PC-9 (cell line): ENCODE measurements at regions of chr1 and their contacts with region 1.

Region 1: DNA sequence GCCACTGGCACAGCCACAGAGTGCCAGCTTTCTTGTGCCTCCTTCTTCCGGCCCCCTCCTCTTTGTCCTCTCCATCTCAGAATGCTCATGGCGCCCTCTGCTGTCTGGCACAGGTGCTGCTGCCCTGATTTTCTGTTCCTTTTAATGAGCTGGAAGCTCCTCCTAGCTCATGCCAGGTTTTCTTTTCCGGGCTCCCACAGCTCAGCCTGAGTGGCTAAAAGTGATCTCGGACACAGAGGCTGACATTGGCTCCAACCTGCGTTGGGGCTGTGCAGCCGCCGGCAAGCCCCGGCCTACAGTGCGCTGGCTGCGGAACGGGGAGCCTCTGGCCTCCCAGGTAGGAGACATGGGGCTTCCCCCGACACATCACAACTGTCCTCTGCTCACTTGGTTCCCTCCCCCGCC is 18.7 kb downstream of the CNTN2 start:
- DNase-seq: peak; percentile 37 to 77
- H3K4me3 ChIP-seq: no peak overlapping the region
- H3K27ac ChIP-seq: no peak overlapping the region
- H3K4me1 ChIP-seq: no peaks in the 10 kb centered on the region
- H3K27me3 ChIP-seq: peaks cover 84% of the 10 kb centered on the region
- CTCF ChIP-seq: peak; percentile 91

Region 2: GRCh38 chr1:204959374-204959773 is 102.3 kb before region 1 on chr1:
- CTCF ChIA-PET with region 1: no interaction called
- POLR2A ChIA-PET with region 1: no interaction called
- intact Hi-C with region 1: no loop called
- DNase-seq: no peak
- H3K4me3 ChIP-seq: no peak overlapping the region
- H3K27ac ChIP-seq: no peak overlapping the region
- H3K4me1 ChIP-seq: no peaks in the 10 kb centered on the region
- H3K27me3 ChIP-seq: peaks cover 100% of the 10 kb centered on the region
- CTCF ChIP-seq: no peak

Region 3: GRCh38 chr1:204975570-204976235 is 86.0 kb before region 1 on chr1:
- CTCF ChIA-PET with region 1: interaction called, 3 read pairs
- POLR2A ChIA-PET with region 1: no interaction called
- intact Hi-C with region 1: loop called (anchors 1 kb)
- DNase-seq: peak in 1 of 2 experiments; percentile 59
- H3K4me3 ChIP-seq: no peak overlapping the region
- H3K27ac ChIP-seq: no peak overlapping the region
- H3K4me1 ChIP-seq: no peaks in the 10 kb centered on the region
- H3K27me3 ChIP-seq: peaks cover 93% of the 10 kb centered on the region
- CTCF ChIP-seq: peak; percentile 91

Region 4: DNA sequence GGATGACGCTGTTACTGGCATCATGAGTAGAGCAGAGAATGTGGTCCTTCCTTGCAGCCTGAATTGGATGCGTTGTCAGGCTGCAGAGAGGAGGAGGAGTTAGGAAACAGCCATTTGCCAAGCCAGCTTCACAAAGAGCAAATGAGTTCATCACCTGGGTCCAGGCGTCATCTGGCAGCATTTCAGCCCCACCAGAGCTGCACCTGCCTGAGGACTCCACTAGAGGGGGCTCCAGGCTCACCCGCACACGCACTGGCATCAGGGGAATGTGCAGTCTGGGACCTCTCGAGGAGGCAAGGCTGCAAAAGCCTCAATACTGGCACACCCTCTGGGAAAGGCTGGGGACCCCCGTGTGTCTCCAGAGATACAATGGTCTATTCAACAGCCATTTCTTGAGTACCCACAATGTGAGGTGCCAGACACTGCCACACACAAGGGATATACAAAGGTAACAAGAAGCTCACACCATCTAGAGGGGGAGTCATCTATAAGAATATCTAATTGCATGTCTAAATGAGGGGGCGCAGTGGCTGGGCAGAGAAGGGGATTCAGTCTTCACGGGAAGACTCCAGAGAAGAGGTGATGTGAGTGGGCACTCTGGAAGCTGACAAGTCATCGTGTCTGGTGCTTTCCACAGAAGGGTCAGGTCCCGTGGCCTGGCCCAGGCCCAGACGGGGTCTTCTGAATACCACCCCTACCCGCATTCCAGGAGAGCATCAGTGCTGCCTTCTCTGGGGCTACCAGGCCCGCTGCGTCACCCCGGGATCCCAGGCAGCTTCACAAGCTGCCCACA is 72.2 kb before region 1 on chr1:
- CTCF ChIA-PET with region 1: interaction called, 25 read pairs
- POLR2A ChIA-PET with region 1: no interaction called
- intact Hi-C with region 1: loop called (anchors 1 kb)
- DNase-seq: peak in 1 of 2 experiments; percentile 68
- H3K4me3 ChIP-seq: no peak overlapping the region
- H3K27ac ChIP-seq: no peak overlapping the region
- H3K4me1 ChIP-seq: no peaks in the 10 kb centered on the region
- H3K27me3 ChIP-seq: peaks cover 99% of the 10 kb centered on the region
- CTCF ChIP-seq: peak; percentile 93

Region 5: GRCh38 chr1:205227584-205228006 is 165.9 kb after region 1 on chr1 and contains the start of gene TMCC2:
- CTCF ChIA-PET with region 1: interaction called, 10 read pairs
- POLR2A ChIA-PET with region 1: interaction called, 3 read pairs
- intact Hi-C with region 1: no loop called
- DNase-seq: peak; percentile 52 to 82
- H3K4me3 ChIP-seq: peak within 1 kb of the TSS; percentile 58
- H3K27ac ChIP-seq: no peak within 1 kb of the TSS
- H3K4me1 ChIP-seq: 0 out of 2 replicates have a peak, but pooled peaks cover 8% of the 10 kb centered on the region
- H3K27me3 ChIP-seq: peaks cover 12% of the 10 kb centered on the region; the same call in 1 of the 2 replicates
- CTCF ChIP-seq: no peak
- total RNA-seq, gene TMCC2: 0.79 and 0.80 TPM in 2 replicates